Activated CD4-positive, alpha-beta T cell treated with anti-CD3 and anti-CD28 coated beads, Interleukin-2, amount 10 ng/mL, durations not matched to agents 24 days and 14 days (primary cell): ENCODE measurements at regions of chr7 and their contacts with region 1.

Region 1: DNA sequence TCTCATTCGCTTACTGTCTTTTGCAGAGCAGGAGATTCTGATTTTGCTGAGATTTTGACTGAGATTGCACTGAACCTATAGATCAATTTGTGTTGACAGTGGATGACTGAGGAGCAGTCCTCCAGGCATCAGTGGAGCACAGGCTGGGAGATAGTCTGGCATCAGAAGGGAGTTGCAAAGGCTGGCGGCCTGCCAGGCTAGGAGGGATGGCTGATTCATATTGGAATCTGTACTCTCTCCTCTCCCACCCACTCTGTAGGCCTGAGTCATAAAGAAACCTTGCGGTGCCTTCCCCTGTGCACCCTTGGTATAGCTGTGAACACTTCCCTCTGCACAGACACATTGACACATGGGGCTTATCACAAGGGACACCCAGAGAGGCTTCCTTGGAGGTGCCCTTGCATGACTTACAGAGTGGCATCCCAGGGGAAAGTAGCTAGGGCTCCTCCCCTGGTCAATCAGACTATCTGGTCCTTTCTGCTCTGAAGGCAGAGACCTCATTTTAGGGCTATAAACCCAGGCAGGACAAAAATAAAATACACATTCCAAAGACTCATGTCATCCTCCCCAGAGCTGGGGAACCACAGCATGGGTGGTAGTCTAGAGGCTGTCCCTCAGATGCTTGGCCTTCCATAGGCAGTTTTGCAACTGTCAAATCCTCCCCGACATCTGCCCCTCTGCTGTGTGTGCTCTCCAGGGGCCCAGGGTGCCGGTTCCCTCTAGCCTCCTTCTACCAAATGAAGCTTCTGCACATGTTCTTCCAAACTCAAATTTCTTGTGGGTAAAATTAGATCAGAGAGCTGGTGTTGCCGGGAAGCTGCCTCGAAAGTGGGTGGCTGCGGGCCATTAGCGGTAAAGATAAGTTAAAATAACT is 37.4 kb upstream of the EEPD1 start:
- DNase-seq: peak; percentile 83
- H3K4me3 Mint-ChIP-seq: no peak overlapping the region
- H3K27ac Mint-ChIP-seq: peak overlapping the region; percentile 36
- H3K4me1 Mint-ChIP-seq: peaks cover 21% of the 10 kb centered on the region
- H3K27me3 Mint-ChIP-seq: peaks cover 28% of the 10 kb centered on the region

Region 2: DNA sequence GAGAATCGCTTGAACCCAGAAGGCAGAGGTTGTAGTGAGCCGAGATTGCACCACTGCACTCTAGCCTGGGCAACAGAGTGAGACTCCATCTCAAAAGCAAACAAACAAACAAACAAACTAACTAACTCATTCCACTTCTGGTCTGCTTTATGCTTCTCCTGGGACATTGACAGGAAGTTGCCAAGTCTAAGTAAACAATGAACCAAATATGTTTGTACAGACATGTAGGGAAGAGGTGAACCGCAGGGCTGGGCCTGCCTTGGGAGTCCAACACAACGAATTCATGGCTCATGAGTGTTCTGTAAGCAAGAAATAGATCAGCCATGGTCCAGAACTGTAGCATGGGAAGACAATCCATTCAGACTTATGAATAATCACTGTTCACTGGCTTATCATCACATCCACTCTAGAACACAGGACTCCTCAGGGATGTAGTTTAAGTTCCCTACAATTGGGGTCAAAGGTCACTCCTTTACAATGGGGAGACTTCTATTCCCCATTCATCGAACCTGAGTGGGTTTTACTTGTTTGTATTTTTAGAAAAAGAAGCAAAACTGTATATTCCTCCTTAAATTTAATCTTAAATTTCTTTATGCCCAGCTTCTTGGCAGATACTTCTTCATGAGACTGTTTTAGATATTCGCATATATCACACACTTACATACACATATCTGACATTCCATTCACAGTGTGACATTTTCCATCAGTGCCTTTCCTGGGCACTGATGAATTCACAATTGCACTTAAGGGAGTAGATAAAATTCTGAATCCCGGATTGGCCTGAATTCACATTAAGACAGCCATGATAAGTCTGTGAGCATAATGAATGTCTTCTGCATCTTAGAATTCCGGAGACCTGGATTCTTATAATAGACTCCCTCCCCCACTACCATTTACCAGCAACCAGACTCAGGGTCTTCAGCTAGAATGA is 121.7 kb before region 1 on chr7:
- intact Hi-C with region 1: loop called (anchors 10 kb)
- DNase-seq: no peak
- H3K4me3 Mint-ChIP-seq: no peak overlapping the region
- H3K27ac Mint-ChIP-seq: no peak overlapping the region
- H3K4me1 Mint-ChIP-seq: peaks cover 7% of the 10 kb centered on the region
- H3K27me3 Mint-ChIP-seq: no peaks in the 10 kb centered on the region

Region 3: GRCh38 chr7:36171503-36171902 is 55.8 kb after region 1 on chr7:
- intact Hi-C with region 1: loop called (anchors 5 kb)
- DNase-seq: no peak
- H3K4me3 Mint-ChIP-seq: no peak overlapping the region
- H3K27ac Mint-ChIP-seq: no peak overlapping the region
- H3K4me1 Mint-ChIP-seq: peaks cover 5% of the 10 kb centered on the region
- H3K27me3 Mint-ChIP-seq: peaks cover 7% of the 10 kb centered on the region

Region 4: GRCh38 chr7:36291387-36292316 is 176.0 kb after region 1 on chr7:
- intact Hi-C with region 1: loop called (anchors 1 kb)
- DNase-seq: peak; percentile 91
- H3K4me3 Mint-ChIP-seq: peak overlapping the region; percentile 77
- H3K27ac Mint-ChIP-seq: no peak overlapping the region
- H3K4me1 Mint-ChIP-seq: peaks cover 40% of the 10 kb centered on the region
- H3K27me3 Mint-ChIP-seq: no peaks in the 10 kb centered on the region